Activated CD4-positive, alpha-beta T cell treated with anti-CD3 and anti-CD28 coated beads for 36 hours (primary cell): ENCODE measurements at regions of chr4 and their contacts with region 1.

Region 1: GRCh38 chr4:10157478-10158332 is 41.1 kb upstream of the WDR1 start:
- DNase-seq: peak; percentile 64
- ATAC-seq: peak; percentile 64
- H3K4me3 Mint-ChIP-seq: no peak overlapping the region
- H3K27ac Mint-ChIP-seq: peak overlapping the region; percentile 6
- H3K4me1 Mint-ChIP-seq: peaks cover 21% of the 10 kb centered on the region
- H3K27me3 Mint-ChIP-seq: no peaks in the 10 kb centered on the region

Region 2: GRCh38 chr4:10058371-10058770 is 99.3 kb before region 1 on chr4:
- CTCF ChIA-PET with region 1: no interaction called
- POLR2A ChIA-PET with region 1: interaction called, 11 read pairs
- intact Hi-C with region 1: no loop called
- DNase-seq: no peak
- ATAC-seq: no peak
- H3K4me3 Mint-ChIP-seq: no peak overlapping the region
- H3K27ac Mint-ChIP-seq: no peak overlapping the region
- H3K4me1 Mint-ChIP-seq: no peaks in the 10 kb centered on the region
- H3K27me3 Mint-ChIP-seq: no peaks in the 10 kb centered on the region

Region 3: GRCh38 chr4:10403633-10404445 is 246.1 kb after region 1 on chr4:
- CTCF ChIA-PET with region 1: interaction called, 11 read pairs
- POLR2A ChIA-PET with region 1: no interaction called
- intact Hi-C with region 1: loop called in 1 of 2 experiments (anchors 1 kb)
- DNase-seq: peak; percentile 7
- ATAC-seq: no peak
- H3K4me3 Mint-ChIP-seq: no peak overlapping the region
- H3K27ac Mint-ChIP-seq: no peak overlapping the region
- H3K4me1 Mint-ChIP-seq: no peaks in the 10 kb centered on the region
- H3K27me3 Mint-ChIP-seq: no peaks in the 10 kb centered on the region

Region 4: DNA sequence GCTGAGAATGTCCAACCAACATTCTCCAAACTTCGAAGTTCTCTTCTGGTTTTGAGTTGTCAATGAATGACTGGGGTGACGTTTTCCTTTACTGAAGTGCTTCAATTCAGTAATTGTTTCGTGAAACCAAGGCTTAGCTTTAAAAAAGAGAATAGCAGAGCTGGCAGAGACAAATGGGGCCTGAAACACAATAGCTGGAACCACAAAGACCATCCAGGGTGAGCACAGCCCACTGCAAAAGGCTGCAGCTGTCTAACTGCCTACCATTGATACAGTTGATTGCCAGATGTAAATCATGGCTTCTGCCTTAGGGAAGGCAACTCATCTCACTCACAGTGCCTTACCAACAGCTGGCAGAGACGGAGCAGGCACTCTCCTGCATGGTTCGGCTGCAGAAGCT is 378.2 kb after region 1 on chr4:
- CTCF ChIA-PET with region 1: interaction called, 14 read pairs
- POLR2A ChIA-PET with region 1: no interaction called
- intact Hi-C with region 1: loop called (anchors 1 kb)
- DNase-seq: no peak
- ATAC-seq: no peak
- H3K4me3 Mint-ChIP-seq: no peak overlapping the region
- H3K27ac Mint-ChIP-seq: no peak overlapping the region
- H3K4me1 Mint-ChIP-seq: no peaks in the 10 kb centered on the region
- H3K27me3 Mint-ChIP-seq: no peaks in the 10 kb centered on the region